ENCODE measurements at regions of chr6 and their contacts with region 1.

Region 1: GRCh38 chr6:30533460-30534294 is 22.6 kb downstream of the GNL1 start:
- DNase-seq: no peak
- H3K4me3 ChIP-seq: no peak overlapping the region
- H3K27ac ChIP-seq: no peak overlapping the region
- H3K27me3 ChIP-seq: no peaks in the 10 kb centered on the region
- CTCF ChIP-seq: no peak

Region 2: DNA sequence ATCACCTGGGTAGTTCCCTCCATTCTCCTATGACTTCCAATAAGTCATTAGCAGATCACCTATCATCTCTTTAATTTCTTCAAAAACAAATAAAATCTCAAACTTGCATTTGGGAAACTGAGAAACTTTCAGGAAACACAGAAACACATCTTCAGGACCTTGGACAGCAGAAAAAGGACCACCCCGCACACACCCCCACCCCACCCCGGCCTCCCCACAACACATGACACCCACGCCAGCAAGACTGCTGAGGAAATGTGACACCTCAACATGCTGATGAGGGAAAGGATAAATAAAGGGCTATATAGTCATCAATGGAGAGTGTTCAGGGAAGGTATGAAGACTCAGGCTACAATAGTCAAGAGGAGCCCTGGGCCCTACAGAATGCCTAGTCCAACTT is 222.6 kb before region 1 on chr6:
- CTCF ChIA-PET with region 1: no interaction called
- POLR2A ChIA-PET with region 1: no interaction called
- DNase-seq: no peak
- H3K4me3 ChIP-seq: no peak overlapping the region
- H3K27ac ChIP-seq: no peak overlapping the region
- H3K27me3 ChIP-seq: no peaks in the 10 kb centered on the region
- CTCF ChIP-seq: no peak

Region 3: GRCh38 chr6:30463651-30464618 is 69.7 kb before region 1 on chr6:
- CTCF ChIA-PET with region 1: interaction called, 12 read pairs
- POLR2A ChIA-PET with region 1: no interaction called
- DNase-seq: no peak
- H3K4me3 ChIP-seq: no peak overlapping the region
- H3K27ac ChIP-seq: no peak overlapping the region
- H3K27me3 ChIP-seq: peaks cover 87% of the 10 kb centered on the region
- CTCF ChIP-seq: no peak

Region 4: DNA sequence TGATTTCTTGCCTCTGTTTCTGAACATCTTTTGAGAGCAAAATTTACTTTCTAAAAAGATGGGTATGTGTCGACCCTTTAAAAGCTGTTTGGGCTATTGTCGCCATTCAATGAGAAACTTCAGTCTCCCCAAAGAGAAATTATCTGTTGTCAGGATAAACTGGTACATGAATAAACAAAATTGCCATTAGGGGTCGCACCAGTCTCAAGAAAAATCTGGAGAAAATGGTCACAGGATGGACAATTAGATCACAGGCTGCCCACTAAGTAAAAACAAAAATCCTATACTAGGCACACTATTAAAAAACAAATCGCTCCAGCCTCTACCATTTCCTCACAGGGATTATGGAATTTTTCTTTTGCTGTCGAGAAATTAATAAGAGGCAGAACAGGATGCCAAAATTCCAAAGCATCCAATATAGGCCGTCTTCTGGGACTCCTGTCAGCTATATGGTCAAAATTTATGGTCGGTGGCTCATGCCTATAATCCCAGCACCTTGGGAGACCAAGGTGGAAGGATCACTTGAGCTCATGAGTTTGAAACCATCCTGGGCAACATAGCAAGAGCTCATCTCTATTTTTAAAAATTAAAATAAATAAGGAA is 49.9 kb before region 1 on chr6:
- CTCF ChIA-PET with region 1: interaction called, 437 read pairs
- POLR2A ChIA-PET with region 1: interaction called, 5 read pairs
- DNase-seq: no peak
- H3K4me3 ChIP-seq: no peak overlapping the region
- H3K27ac ChIP-seq: no peak overlapping the region
- H3K27me3 ChIP-seq: peaks cover 34% of the 10 kb centered on the region
- CTCF ChIP-seq: peak; percentile 64

Region 5: GRCh38 chr6:30489081-30490025 is 44.3 kb before region 1 on chr6 and contains the start of gene HLA-E:
- CTCF ChIA-PET with region 1: interaction called, 437 read pairs
- POLR2A ChIA-PET with region 1: no interaction called
- DNase-seq: peak; percentile 99
- H3K4me3 ChIP-seq: peak within 1 kb of the TSS; percentile 96
- H3K27ac ChIP-seq: peak within 1 kb of the TSS; percentile 94
- H3K27me3 ChIP-seq: no peaks in the 10 kb centered on the region
- CTCF ChIP-seq: no peak
- polyA plus RNA-seq, gene HLA-E: 127 and 136 TPM in 2 replicates

Region 6: GRCh38 chr6:30500421-30501355 is 33.0 kb before region 1 on chr6:
- CTCF ChIA-PET with region 1: interaction called, 31 read pairs
- POLR2A ChIA-PET with region 1: interaction called, 10 read pairs
- DNase-seq: no peak
- H3K4me3 ChIP-seq: no peak overlapping the region
- H3K27ac ChIP-seq: peak overlapping the region; percentile 21
- H3K27me3 ChIP-seq: no peaks in the 10 kb centered on the region
- CTCF ChIP-seq: no peak

Region 7: GRCh38 chr6:30508890-30509736 is 24.6 kb before region 1 on chr6:
- CTCF ChIA-PET with region 1: interaction called, 31 read pairs
- POLR2A ChIA-PET with region 1: interaction called, 10 read pairs
- DNase-seq: no peak
- H3K4me3 ChIP-seq: no peak overlapping the region
- H3K27ac ChIP-seq: no peak overlapping the region
- H3K27me3 ChIP-seq: no peaks in the 10 kb centered on the region
- CTCF ChIP-seq: no peak

Region 8: DNA sequence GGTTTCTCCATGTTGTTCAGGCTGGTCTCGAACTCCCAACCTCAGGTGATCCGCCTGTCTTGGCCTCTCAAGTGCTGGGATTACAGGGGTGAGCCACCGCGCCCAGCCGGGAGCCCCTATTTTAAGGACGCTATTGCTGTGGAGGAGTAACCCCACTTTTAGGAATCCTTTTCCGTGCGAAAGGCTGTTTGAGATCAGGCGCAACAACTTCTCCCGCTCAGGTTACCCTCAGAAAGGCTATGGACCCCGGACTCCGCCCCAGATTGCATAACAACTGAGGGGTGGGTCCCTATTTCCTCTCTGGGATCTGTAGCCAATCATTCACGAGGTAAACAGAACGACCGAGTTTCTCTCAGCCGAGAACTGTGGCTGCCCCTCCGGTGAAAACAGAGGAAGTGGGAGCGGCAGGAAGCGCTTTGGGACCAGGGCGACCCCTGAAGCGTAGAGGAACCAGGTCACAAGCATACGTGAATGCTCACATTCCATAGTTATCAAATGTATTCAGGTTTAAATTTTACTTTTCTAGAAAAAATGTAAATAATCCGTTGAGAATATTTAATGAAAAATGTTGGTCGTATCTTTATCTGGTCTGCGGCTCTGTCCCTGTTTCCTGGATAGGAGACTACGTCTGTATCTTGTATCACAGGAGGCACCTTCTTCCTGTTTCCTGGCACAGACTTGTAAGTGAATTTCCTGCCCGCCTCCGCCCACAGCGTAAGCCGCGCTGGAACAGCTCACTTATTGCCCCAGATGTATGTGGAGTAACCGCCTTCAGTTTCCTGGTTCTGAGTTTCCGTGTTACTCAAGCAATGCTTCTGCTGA is 17.5 kb before region 1 on chr6:
- CTCF ChIA-PET with region 1: interaction called, 9 read pairs
- POLR2A ChIA-PET with region 1: interaction called, 10 read pairs
- DNase-seq: peak; percentile 86
- H3K4me3 ChIP-seq: peak overlapping the region; percentile 56
- H3K27ac ChIP-seq: peak overlapping the region; percentile 93
- H3K27me3 ChIP-seq: no peaks in the 10 kb centered on the region
- CTCF ChIP-seq: no peak

Region 9: DNA sequence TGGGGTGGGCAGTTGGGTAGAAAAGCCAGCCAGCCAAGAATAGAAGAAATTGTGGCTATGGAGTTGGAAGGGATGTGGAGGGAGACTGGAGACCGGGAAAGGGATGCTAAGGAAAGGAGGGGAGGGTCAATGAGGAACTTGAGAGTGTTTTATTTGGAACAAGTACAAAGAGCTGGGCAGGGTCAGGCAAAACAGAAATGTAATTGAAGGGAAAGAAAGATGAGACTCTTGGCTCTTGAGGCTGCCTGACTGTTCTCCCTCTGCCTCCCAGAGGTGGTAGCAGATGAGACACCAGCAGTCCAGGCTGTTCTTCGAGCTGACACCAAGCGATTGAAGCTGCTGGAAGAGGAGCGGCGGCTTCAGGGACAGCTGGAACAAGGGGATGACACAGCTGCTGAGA is 50.2 kb after region 1 on chr6:
- CTCF ChIA-PET with region 1: no interaction called
- POLR2A ChIA-PET with region 1: no interaction called
- DNase-seq: no peak
- H3K4me3 ChIP-seq: no peak overlapping the region
- H3K27ac ChIP-seq: no peak overlapping the region
- H3K27me3 ChIP-seq: no peaks in the 10 kb centered on the region
- CTCF ChIP-seq: no peak